PC-3 (cell line): ENCODE measurements at regions of chr1 and their contacts with region 1.

Region 1: DNA sequence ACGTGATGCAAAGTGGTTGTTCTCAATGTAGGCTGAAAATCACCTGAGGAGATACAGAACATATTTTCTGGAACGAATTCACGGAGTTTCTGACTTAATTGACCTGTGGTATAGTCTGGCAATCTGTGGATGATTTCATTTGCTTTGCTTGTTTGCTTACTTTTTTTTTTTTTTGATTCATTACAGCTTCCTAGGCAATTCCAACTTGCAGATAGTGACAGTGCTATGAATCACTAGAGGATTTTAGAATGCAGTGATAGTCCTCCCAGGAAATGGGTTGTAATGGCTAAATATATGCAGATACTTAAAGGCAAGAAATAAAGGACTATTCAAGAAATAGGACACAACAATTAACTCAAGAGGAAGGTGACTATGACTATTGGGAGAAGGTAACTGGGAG is 1378.1 kb upstream of the PRMT6 start:
- DNase-seq: peak; percentile 77
- ATAC-seq: peak; percentile 95
- H3K4me3 ChIP-seq: no peak overlapping the region
- H3K27ac ChIP-seq: peak overlapping the region; percentile 13; the same call in 1 of the 2 replicates
- H3K4me1 ChIP-seq: peaks cover 16% of the 10 kb centered on the region
- H3K27me3 ChIP-seq: no peaks in the 10 kb centered on the region
- CTCF ChIP-seq: no peak

Region 2: DNA sequence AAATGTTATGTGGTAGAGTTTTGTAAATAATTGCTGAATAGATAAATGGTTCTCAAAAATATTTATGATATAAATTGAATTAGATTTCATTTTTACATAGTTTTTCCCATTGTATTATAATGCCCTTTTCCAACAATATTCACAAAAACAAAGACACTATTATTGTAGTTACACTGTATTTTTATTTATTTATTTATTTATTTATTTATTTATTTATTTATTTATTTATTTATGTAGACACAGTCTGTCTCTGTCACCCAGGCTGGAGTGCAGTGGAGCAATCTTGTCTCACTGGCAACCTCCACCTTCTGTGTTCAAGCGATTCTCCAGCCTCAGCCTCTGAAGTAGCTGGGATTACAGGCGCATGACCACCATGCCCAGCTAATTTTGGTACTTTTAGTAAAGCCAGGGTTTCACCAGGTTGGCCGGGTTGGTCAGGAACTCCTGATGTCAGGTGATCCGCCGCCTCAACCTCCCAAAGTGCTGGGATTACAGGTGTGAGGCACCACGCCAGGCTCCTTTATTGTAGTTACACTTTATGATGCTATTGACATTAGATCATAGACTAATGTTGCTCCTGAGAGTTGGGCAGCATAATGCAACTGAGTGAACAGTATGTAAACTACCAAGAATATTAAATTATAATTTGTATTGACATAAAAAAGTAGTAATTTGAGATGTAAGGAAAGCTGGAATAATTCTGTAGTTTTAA is 51.9 kb before region 1 on chr1:
- CTCF ChIA-PET with region 1: no interaction called
- POLR2A ChIA-PET with region 1: no interaction called
- intact Hi-C with region 1: loop called (anchors 10 kb)
- DNase-seq: no peak
- ATAC-seq: no peak
- H3K4me3 ChIP-seq: no peak overlapping the region
- H3K27ac ChIP-seq: no peak overlapping the region
- H3K4me1 ChIP-seq: no peaks in the 10 kb centered on the region
- H3K27me3 ChIP-seq: no peaks in the 10 kb centered on the region
- CTCF ChIP-seq: no peak

Region 3: GRCh38 chr1:105641407-105641806 is 36.9 kb before region 1 on chr1:
- CTCF ChIA-PET with region 1: no interaction called
- POLR2A ChIA-PET with region 1: no interaction called
- intact Hi-C with region 1: no loop called
- DNase-seq: peak; percentile 18
- ATAC-seq: no peak; the same call in 1 of the 2 replicates
- H3K4me3 ChIP-seq: no peak overlapping the region
- H3K27ac ChIP-seq: no peak overlapping the region
- H3K4me1 ChIP-seq: no peaks in the 10 kb centered on the region
- H3K27me3 ChIP-seq: no peaks in the 10 kb centered on the region
- CTCF ChIP-seq: 0 out of 2 replicates have a peak, but pooled peaks have one; percentile 12

Region 4: DNA sequence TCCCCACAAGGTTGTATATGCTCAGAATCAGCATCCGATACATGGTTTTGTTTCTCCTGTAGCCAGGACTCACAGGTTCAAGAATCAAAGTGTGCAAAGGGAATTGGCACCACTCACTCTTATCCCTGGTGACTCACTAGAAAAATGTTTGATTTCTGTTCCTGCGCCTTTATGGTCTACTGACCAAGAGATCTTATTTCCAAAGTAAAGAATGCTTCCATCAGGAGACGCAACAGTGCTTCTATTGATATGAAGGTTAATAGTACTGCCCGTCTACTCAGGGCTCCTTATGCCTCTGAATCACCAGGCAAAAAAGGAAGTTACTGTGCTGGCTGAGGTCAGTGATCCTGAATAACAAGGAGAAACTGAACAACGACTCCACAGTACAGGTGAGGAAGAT is 13.8 kb before region 1 on chr1:
- CTCF ChIA-PET with region 1: no interaction called
- POLR2A ChIA-PET with region 1: no interaction called
- intact Hi-C with region 1: loop called (anchors 1 kb)
- DNase-seq: peak; percentile 92
- ATAC-seq: peak; percentile 98
- H3K4me3 ChIP-seq: no peak overlapping the region
- H3K27ac ChIP-seq: peak overlapping the region; percentile 55
- H3K4me1 ChIP-seq: peaks cover 22% of the 10 kb centered on the region
- H3K27me3 ChIP-seq: no peaks in the 10 kb centered on the region
- CTCF ChIP-seq: no peak

Region 5: GRCh38 chr1:105724286-105724685 is 46.0 kb after region 1 on chr1:
- CTCF ChIA-PET with region 1: no interaction called
- POLR2A ChIA-PET with region 1: no interaction called
- intact Hi-C with region 1: loop called (anchors 5 kb)
- DNase-seq: peak; percentile 5
- ATAC-seq: no peak; the same call in 1 of the 2 replicates
- H3K4me3 ChIP-seq: no peak overlapping the region
- H3K27ac ChIP-seq: no peak overlapping the region
- H3K4me1 ChIP-seq: no peaks in the 10 kb centered on the region
- H3K27me3 ChIP-seq: no peaks in the 10 kb centered on the region
- CTCF ChIP-seq: no peak